ENCODE measurements at regions of chr16 and their contacts with region 1.

Region 1: DNA sequence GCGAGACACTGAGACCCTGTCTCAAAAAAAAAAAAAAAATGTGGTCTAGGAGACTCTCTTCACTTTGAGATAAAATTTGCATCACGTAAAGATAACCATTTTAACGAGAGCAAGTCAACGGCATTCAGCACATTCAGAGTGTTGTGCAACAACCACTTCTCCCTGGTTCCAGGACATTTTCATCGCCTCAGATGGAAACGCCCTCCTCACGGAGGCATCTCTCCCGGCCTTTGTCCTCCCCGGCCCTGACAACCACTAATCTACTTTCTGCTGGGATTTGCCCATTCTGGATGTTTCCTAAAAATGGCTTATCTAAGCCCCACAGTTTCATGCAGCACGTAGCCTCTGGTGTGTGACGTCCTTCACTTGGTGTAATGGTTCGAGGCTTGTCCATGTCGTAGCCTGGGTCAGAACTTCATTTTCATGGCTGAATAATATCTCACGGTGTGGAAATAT is 6.4 kb upstream of the NPRL3 start:
- DNase-seq: no peak
- H3K4me3 ChIP-seq: no peak overlapping the region
- H3K27ac ChIP-seq: no peak overlapping the region
- H3K4me1 ChIP-seq: no peaks in the 10 kb centered on the region
- H3K27me3 ChIP-seq: peaks cover 24% of the 10 kb centered on the region
- CTCF ChIP-seq: no peak
- EP300 ChIP-seq: no peak
- POLR2A ChIP-seq: no peak

Region 2: GRCh38 chr16:175011-175919 is 30.4 kb after region 1 on chr16:
- in situ Hi-C with region 1: no loop called
- intact Hi-C with region 1: loop called (anchors 1 kb)
- DNase-seq: no peak
- H3K4me3 ChIP-seq: no peak overlapping the region
- H3K27ac ChIP-seq: no peak overlapping the region
- H3K4me1 ChIP-seq: peaks cover 0 to 12% (median 8%) of the 10 kb centered on the region in 4 donors
- H3K27me3 ChIP-seq: peaks cover 79% of the 10 kb centered on the region
- CTCF ChIP-seq: no peak
- EP300 ChIP-seq: no peak
- POLR2A ChIP-seq: no peak

Region 3: DNA sequence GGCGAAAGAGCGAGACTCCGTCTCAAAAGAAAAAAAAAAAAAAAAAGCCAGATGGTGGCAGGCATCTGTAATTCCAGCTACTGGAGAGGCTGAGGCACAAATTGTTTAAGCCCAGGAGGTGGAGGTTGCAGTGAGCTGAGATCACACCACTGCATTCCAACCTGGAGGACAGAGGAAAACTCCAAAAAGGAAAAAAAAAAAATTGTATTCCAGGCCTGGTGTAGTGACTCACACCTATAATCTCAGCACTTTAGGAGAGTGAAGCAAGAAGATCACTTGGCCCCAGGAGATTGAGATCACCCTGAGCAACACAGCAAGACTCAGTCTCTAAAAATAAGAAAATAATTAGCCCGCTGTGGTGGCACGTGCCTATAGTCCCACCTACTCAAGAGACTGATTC is 55.6 kb after region 1 on chr16:
- in situ Hi-C with region 1: no loop called
- intact Hi-C with region 1: no loop called
- DNase-seq: no peak
- H3K4me3 ChIP-seq: no peak overlapping the region
- H3K27ac ChIP-seq: no peak overlapping the region
- H3K4me1 ChIP-seq: no peaks in the 10 kb centered on the region
- H3K27me3 ChIP-seq: no peaks in the 10 kb centered on the region
- CTCF ChIP-seq: no peak
- EP300 ChIP-seq: no peak
- POLR2A ChIP-seq: no peak

Measured in transverse colon (tissue), 4 donors.